ENCODE measurements at regions of chr14 and their contacts with region 1.

Region 1: GRCh38 chr14:89618811-89619551 is 201.9 kb upstream of the FOXN3 start:
- DNase-seq: peak; percentile 71
- H3K4me3 Mint-ChIP-seq: peak overlapping the region; percentile 91
- H3K27ac Mint-ChIP-seq: peak overlapping the region; percentile 98
- H3K4me1 Mint-ChIP-seq: peaks cover 66% of the 10 kb centered on the region
- H3K27me3 Mint-ChIP-seq: no peaks in the 10 kb centered on the region

Region 2: GRCh38 chr14:89040460-89041259 is 578.3 kb before region 1 on chr14:
- CTCF ChIA-PET with region 1: no interaction called
- POLR2A ChIA-PET with region 1: no interaction called
- intact Hi-C with region 1: loop called (anchors 10 kb)
- DNase-seq: peak; percentile 87
- H3K4me3 Mint-ChIP-seq: peak overlapping the region; percentile 62
- H3K27ac Mint-ChIP-seq: no peak overlapping the region
- H3K4me1 Mint-ChIP-seq: peaks cover 4% of the 10 kb centered on the region
- H3K27me3 Mint-ChIP-seq: peaks cover 15% of the 10 kb centered on the region

Region 3: DNA sequence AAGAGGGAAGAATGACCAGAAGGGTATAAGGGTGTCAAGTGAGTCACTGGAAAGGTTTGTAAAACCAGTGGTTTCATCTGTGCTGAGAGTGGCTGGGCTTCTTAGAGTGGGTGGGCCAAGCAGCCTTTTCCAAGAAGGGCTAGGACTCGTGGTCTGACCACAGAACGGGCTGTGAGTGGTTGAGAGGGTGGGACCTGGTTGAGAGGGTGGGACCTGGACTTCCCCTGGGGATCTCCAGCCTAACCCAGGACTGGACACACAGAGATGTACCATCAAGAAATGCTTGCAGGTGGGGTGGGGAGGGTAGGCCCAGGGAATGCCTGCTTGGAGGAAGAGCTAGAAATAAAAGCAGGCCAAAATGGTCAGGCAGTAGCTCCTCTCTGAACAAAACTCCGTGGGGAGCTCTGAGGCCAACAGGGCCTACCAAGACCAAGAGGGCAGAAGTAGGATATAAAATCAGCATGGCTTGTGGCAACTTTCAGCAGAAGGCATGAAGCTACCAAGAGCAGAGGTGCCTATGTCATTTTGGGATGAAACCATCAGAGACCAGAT is 342.5 kb before region 1 on chr14:
- CTCF ChIA-PET with region 1: no interaction called
- POLR2A ChIA-PET with region 1: no interaction called
- intact Hi-C with region 1: loop called (anchors 1 kb)
- DNase-seq: peak; percentile 92
- H3K4me3 Mint-ChIP-seq: peak overlapping the region; percentile 60
- H3K27ac Mint-ChIP-seq: peak overlapping the region; percentile 94
- H3K4me1 Mint-ChIP-seq: peaks cover 77% of the 10 kb centered on the region
- H3K27me3 Mint-ChIP-seq: no peaks in the 10 kb centered on the region

Region 4: DNA sequence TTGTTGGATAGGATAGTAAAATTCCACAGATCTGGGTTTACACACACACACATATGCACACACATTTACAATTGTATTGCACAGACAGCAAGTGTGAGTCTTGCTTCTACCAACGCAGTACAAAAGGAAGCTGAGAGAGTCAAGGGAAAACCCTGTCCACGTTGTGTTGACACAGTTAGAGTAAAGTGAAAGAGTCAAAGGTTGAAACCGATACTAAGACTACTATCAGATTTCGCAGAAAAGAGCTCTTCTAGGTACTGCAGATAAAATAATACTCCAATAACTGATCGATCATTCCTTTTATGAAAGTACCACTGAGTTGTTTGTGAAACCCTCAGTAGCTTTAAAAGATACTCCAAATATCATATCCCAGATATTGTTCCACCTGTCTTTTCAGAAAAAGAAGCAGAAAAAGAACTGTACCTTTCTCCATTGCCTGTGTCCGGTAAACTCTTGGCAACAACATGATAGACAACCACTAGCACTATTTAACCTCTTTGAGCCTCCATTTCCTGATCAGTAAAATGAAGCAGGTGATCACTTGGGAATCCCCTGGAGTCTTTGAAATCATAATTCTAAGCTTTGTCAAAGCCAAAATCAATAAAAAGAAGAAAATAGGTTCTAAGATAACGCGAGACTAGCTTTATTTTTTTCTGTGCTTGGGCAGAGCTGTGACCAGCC is 22.7 kb after region 1 on chr14:
- CTCF ChIA-PET with region 1: interaction called, 6 read pairs
- POLR2A ChIA-PET with region 1: interaction called, 24 read pairs
- intact Hi-C with region 1: loop called (anchors 1 kb)
- DNase-seq: peak; percentile 35
- H3K4me3 Mint-ChIP-seq: peak overlapping the region; percentile 53
- H3K27ac Mint-ChIP-seq: peak overlapping the region; percentile 83
- H3K4me1 Mint-ChIP-seq: peaks cover 54% of the 10 kb centered on the region
- H3K27me3 Mint-ChIP-seq: no peaks in the 10 kb centered on the region

Region 5: DNA sequence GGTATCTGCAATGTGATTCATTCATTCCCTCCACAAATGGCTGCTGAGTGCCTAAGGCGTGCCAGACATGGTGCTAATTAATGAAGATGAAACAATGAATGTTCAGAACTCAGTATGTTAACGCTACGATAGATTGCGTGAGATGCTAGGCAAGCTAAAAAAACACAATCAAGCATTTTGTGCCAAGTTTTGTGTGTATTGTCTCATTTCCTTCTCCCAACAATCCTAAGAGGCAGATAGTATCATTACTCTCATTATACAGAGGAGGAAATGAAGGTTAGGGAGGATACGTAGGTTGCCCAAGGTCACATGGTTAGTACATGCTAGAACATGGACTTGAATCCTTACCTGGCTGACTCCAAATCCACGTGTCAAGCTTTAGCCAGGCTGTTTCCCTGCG is 71.2 kb after region 1 on chr14:
- CTCF ChIA-PET with region 1: no interaction called
- POLR2A ChIA-PET with region 1: no interaction called
- intact Hi-C with region 1: no loop called
- DNase-seq: no peak
- H3K4me3 Mint-ChIP-seq: no peak overlapping the region
- H3K27ac Mint-ChIP-seq: no peak overlapping the region
- H3K4me1 Mint-ChIP-seq: peaks cover 8% of the 10 kb centered on the region
- H3K27me3 Mint-ChIP-seq: no peaks in the 10 kb centered on the region

Region 6: DNA sequence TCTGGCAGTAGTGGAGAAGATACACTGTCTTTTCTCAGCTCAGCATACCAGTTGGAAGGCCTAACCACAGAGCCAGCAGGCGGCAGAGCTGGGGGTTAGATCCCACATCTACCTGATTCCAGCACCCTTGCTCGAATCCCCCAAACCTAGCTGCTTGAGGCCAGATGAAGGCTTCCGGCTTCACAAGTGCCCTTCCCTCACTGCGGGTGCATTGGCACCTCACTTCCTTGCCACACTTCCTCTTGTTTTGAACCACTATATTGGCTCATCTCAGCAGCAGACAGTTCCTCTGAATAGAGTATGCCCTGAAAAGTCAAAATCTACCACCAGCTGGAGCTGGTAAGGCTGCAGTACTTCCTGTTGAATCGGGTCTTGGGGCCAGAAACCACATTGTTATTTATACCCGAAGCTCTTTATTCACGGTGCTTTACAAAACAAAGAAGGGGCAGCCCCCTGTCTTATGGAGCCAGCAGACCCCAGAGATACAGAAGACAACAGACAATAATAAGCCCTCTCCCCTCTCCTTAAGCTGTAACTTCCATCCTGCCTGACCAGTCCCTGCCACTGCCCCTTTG is 101.8 kb after region 1 on chr14:
- CTCF ChIA-PET with region 1: interaction called, 3 read pairs
- POLR2A ChIA-PET with region 1: interaction called, 6 read pairs
- intact Hi-C with region 1: loop called (anchors 1 kb)
- DNase-seq: peak; percentile 81
- H3K4me3 Mint-ChIP-seq: peak overlapping the region; percentile 45
- H3K27ac Mint-ChIP-seq: peak overlapping the region; percentile 94
- H3K4me1 Mint-ChIP-seq: peaks cover 70% of the 10 kb centered on the region
- H3K27me3 Mint-ChIP-seq: no peaks in the 10 kb centered on the region

Region 7: GRCh38 chr14:90383075-90383730 is 764.2 kb after region 1 on chr14:
- CTCF ChIA-PET with region 1: no interaction called
- POLR2A ChIA-PET with region 1: no interaction called
- intact Hi-C with region 1: loop called (anchors 10 kb)
- DNase-seq: peak; percentile 99
- H3K4me3 Mint-ChIP-seq: no peak overlapping the region
- H3K27ac Mint-ChIP-seq: no peak overlapping the region
- H3K4me1 Mint-ChIP-seq: peaks cover 22% of the 10 kb centered on the region
- H3K27me3 Mint-ChIP-seq: no peaks in the 10 kb centered on the region

Measured in activated CD4-positive, alpha-beta memory T cell treated with anti-CD3 and anti-CD28 coated beads for 36 hours (primary cell).